ENCODE measurements at regions of chr14 and their contacts with region 1.

Region 1: DNA sequence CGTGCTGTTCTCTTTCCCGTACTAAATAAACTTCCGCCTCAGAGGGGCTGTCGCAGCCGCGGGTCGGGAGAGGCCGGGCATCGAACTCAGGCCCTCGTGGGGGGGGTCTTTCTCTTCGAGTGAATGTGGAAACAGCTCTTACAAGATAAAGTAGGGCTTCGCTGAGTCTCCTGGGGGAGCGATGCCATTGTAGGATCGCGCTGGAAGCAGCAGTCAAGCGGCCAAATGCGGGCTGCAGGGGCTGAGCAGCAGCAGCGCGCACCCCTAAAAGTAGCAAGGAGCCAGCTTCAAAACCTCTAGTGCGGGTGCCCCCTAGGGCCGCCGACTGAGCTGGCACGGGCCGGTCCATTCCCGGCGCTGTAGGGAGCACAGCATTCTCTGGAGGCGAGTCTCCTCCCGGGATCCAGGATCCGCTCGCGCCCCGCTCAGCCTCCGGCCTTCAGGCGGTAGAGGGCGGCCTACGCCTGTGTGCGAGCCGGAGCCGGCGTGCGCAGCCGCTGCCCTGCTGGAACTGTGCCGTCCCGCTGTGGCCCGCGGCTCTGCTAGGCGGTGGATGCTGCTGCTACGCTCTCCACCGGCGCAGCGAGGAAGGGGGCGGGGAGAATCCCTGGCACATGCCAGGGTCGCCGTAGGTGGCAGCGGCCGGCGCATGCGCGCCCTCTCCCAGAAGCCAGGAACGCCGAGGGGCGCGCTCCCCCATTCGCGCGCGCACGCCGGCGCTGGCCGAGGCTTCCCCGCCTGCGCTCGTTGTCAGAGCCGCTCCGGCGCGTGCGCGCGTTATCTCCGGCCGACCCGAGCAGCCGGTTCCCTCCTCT is at the start of gene FUT8:
- DNase-seq: peak; percentile 90
- H3K4me3 Mint-ChIP-seq: peak within 1 kb of the TSS; percentile 95
- H3K27ac Mint-ChIP-seq: peak within 1 kb of the TSS; percentile 95
- H3K4me1 Mint-ChIP-seq: peaks cover 37% of the 10 kb centered on the region
- H3K27me3 Mint-ChIP-seq: no peaks in the 10 kb centered on the region
- total RNA-seq, gene FUT8: 110 and 124 TPM in 2 replicates

Region 2: DNA sequence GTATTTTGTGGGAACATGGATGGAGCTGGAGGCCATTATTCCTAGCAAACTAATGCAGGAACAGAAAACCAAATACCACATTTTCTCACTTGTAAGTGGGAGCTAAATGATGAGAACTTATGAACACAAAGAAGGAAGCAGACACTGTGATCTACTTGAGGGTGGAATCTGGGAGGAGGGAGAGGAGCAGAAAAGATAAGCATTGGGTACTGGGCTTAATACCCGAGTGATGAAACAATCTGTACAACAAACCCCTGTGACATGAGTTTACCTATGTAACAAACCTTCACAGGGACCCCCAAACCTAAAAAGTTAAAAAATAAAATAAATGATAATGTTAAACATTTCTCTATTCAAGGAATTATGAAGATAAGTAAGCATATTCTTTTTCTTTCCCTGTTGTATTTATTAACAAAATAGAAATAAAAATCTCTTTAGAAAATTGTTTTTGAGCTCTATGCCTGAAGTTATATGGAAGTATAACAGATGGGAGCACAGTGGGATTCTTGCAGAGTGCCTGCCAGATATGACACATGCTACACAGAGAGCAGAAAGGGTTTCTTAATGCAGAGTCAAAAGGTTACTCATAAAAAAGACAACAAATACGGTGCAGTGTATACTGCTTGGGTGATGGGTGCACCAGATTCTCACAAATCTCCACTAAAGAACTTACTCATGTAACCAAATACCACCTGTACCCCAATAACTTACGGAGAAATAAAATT is 1611.4 kb before region 1 on chr14:
- intact Hi-C with region 1: no loop called
- DNase-seq: no peak
- H3K4me3 Mint-ChIP-seq: no peak overlapping the region
- H3K27ac Mint-ChIP-seq: no peak overlapping the region
- H3K4me1 Mint-ChIP-seq: peaks cover 4% of the 10 kb centered on the region
- H3K27me3 Mint-ChIP-seq: peaks cover 8% of the 10 kb centered on the region

Region 3: GRCh38 chr14:65102441-65103149 is 309.6 kb before region 1 on chr14 and contains the start of gene MAX:
- intact Hi-C with region 1: loop called (anchors 5 kb)
- DNase-seq: peak; percentile 99
- H3K4me3 Mint-ChIP-seq: peak within 1 kb of the TSS; percentile 92
- H3K27ac Mint-ChIP-seq: peak within 1 kb of the TSS; percentile 94
- H3K4me1 Mint-ChIP-seq: peaks cover 40% of the 10 kb centered on the region
- H3K27me3 Mint-ChIP-seq: peaks cover 6% of the 10 kb centered on the region
- total RNA-seq, gene MAX: 113 and 115 TPM in 2 replicates

Region 4: GRCh38 chr14:65229751-65230749 is 182.2 kb before region 1 on chr14:
- intact Hi-C with region 1: loop called (anchors 2 kb)
- DNase-seq: no peak
- H3K4me3 Mint-ChIP-seq: peak overlapping the region; percentile 81
- H3K27ac Mint-ChIP-seq: peak overlapping the region; percentile 90
- H3K4me1 Mint-ChIP-seq: peaks cover 42% of the 10 kb centered on the region
- H3K27me3 Mint-ChIP-seq: no peaks in the 10 kb centered on the region

Region 5: GRCh38 chr14:65336191-65336591 is 76.0 kb before region 1 on chr14:
- intact Hi-C with region 1: loop called (anchors 2 kb)
- DNase-seq: peak; percentile 56
- H3K4me3 Mint-ChIP-seq: peak overlapping the region; percentile 87
- H3K27ac Mint-ChIP-seq: peak overlapping the region; percentile 94
- H3K4me1 Mint-ChIP-seq: peaks cover 56% of the 10 kb centered on the region
- H3K27me3 Mint-ChIP-seq: no peaks in the 10 kb centered on the region

Region 6: GRCh38 chr14:65604936-65605335 is 192.7 kb after region 1 on chr14:
- intact Hi-C with region 1: loop called (anchors 10 kb)
- DNase-seq: no peak
- H3K4me3 Mint-ChIP-seq: no peak overlapping the region
- H3K27ac Mint-ChIP-seq: no peak overlapping the region
- H3K4me1 Mint-ChIP-seq: peaks cover 2% of the 10 kb centered on the region
- H3K27me3 Mint-ChIP-seq: no peaks in the 10 kb centered on the region

Region 7: DNA sequence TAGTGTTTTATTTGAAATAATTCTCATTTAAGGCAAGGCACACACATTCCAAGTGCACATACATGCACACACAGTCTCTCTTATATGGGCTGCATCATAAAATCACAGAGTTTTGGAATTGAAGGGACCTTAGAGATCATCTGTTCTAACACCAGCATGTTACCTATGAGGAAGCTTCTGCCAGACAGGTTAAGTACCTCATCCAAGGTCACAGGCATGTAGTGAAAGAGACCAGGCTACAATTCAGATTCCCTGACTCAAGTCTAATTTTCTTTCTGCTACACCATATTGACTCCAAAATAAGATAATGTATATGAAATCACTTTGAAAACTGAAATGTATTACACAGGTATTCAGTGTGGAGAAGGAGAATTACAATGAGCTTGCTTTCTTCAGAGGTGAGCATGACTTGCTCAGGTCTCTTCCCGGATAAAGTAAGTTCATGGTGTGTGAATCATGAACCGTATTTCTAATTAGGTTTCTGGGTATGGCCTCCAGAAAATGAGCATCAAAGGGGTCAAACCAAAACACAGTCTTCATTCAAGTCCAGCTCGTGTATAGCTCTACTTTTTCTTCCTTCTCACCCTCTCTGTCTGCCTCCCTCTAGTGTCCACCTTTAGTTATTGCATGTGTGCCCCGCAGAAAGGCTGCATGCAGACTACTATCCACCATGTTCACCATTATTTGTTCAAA is 412.2 kb after region 1 on chr14:
- intact Hi-C with region 1: loop called (anchors 2 kb)
- DNase-seq: peak; percentile 52
- H3K4me3 Mint-ChIP-seq: no peak overlapping the region
- H3K27ac Mint-ChIP-seq: no peak overlapping the region
- H3K4me1 Mint-ChIP-seq: peaks cover 19% of the 10 kb centered on the region
- H3K27me3 Mint-ChIP-seq: peaks cover 12% of the 10 kb centered on the region

Region 8: GRCh38 chr14:66070509-66071319 is 658.5 kb after region 1 on chr14:
- intact Hi-C with region 1: loop called (anchors 2 kb)
- DNase-seq: peak; percentile 50
- H3K4me3 Mint-ChIP-seq: no peak overlapping the region
- H3K27ac Mint-ChIP-seq: no peak overlapping the region
- H3K4me1 Mint-ChIP-seq: peaks cover 7% of the 10 kb centered on the region
- H3K27me3 Mint-ChIP-seq: peaks cover 13% of the 10 kb centered on the region

Measured in activated T-helper 2 cell treated with anti-CD3 and anti-CD28 coated beads, Interferon-gamma antibody, Interleukin-2, Interleukin-4, amounts not matched to agents 10 μg/mL and 5 μg/mL and 100 μg/mL, durations not matched to agents 14 hours and 24 hours and 36 hours (primary cell).